Panc1 (cell line): ENCODE measurements at regions of chr15 and their contacts with region 1.

Region 1: GRCh38 chr15:23648920-23649515 is 1.4 kb upstream of the MAGEL2 start:
- DNase-seq: no peak
- ATAC-seq: peak; percentile 80; the same call in 1 of the 2 replicates
- H3K4me3 ChIP-seq: no peak overlapping the region
- H3K27ac ChIP-seq: no peak overlapping the region
- H3K4me1 ChIP-seq: no peaks in the 10 kb centered on the region
- H3K27me3 ChIP-seq: peaks cover 10% of the 10 kb centered on the region
- CTCF ChIP-seq: peak; percentile 83

Region 2: GRCh38 chr15:23857028-23857641 is 208.1 kb after region 1 on chr15:
- CTCF ChIA-PET with region 1: no interaction called
- POLR2A ChIA-PET with region 1: no interaction called
- in situ Hi-C with region 1: no loop called
- intact Hi-C with region 1: loop called (anchors 5 kb)
- DNase-seq: no peak
- ATAC-seq: 0 out of 2 replicates have a peak, but pooled peaks have one; percentile 53
- H3K4me3 ChIP-seq: no peak overlapping the region
- H3K27ac ChIP-seq: no peak overlapping the region
- H3K4me1 ChIP-seq: no peaks in the 10 kb centered on the region
- H3K27me3 ChIP-seq: no peaks in the 10 kb centered on the region
- CTCF ChIP-seq: peak; percentile 75

Region 3: GRCh38 chr15:23877502-23878412 is 228.7 kb after region 1 on chr15:
- CTCF ChIA-PET with region 1: no interaction called
- POLR2A ChIA-PET with region 1: no interaction called
- in situ Hi-C with region 1: no loop called
- intact Hi-C with region 1: loop called (anchors 5 kb)
- DNase-seq: no peak
- ATAC-seq: peak; percentile 93
- H3K4me3 ChIP-seq: no peak overlapping the region
- H3K27ac ChIP-seq: no peak overlapping the region
- H3K4me1 ChIP-seq: no peaks in the 10 kb centered on the region
- H3K27me3 ChIP-seq: no peaks in the 10 kb centered on the region
- CTCF ChIP-seq: peak; percentile 83